Caco-2 (cell line): ENCODE measurements at regions of chr15 and their contacts with region 1.

Region 1: DNA sequence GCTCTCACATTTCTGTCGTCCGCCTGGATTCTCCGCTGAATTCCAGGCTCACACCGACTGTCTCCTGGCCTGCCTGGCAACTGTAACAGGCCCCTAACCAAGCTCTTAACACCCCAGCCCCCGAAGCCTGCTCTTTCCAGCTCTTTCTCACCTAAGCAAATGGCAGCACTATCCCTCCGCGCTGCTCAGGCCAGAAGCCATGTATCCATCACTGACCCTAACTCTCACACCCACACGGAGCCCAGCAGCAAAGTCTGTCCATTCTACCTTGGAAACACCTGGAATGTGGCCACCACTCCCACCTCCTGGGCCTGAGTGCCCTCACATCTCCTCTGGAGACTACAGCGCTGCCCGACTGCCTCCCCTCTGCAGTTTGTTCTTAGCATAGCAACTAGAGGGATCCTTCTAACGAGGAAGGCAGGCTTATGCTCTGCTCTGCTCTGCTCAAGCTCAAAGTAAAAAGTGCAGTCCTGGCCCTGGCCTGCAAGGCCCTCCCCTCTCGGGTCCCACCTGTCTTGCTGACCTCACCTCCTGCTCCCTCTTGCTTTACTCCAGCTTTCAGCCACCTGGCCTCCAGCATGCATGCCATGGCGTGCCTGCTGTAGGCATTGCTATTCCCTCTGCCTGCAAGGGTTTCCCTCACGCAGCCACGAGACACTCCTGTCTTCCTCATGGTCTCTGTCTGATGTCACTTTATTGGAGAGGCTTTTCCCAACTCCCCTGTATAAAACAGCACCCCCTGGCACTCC is 27.2 kb downstream of the FEM1B start:
- DNase-seq: peak in 1 of 2 experiments; percentile 33
- H3K4me3 ChIP-seq: no peak overlapping the region
- H3K4me3 Mint-ChIP-seq: no peak overlapping the region
- H3K27ac Mint-ChIP-seq: peak overlapping the region; percentile 19
- H3K4me1 ChIP-seq: peaks cover 23% of the 10 kb centered on the region
- H3K4me1 Mint-ChIP-seq: peaks cover 30% of the 10 kb centered on the region
- H3K27me3 ChIP-seq: no peaks in the 10 kb centered on the region
- H3K27me3 Mint-ChIP-seq: no peaks in the 10 kb centered on the region
- CTCF ChIP-seq: peak in 1 of 2 experiments; percentile 25

Region 2: GRCh38 chr15:67746022-67746421 is 558.7 kb before region 1 on chr15:
- CTCF ChIA-PET with region 1: no interaction called
- POLR2A ChIA-PET with region 1: no interaction called
- intact Hi-C with region 1: no loop called
- DNase-seq: no peak
- H3K4me3 ChIP-seq: no peak overlapping the region
- H3K4me3 Mint-ChIP-seq: no peak overlapping the region
- H3K27ac Mint-ChIP-seq: no peak overlapping the region
- H3K4me1 ChIP-seq: peaks cover 5% of the 10 kb centered on the region; the same call in 1 of the 2 replicates
- H3K4me1 Mint-ChIP-seq: peaks cover 7% of the 10 kb centered on the region
- H3K27me3 ChIP-seq: no peaks in the 10 kb centered on the region
- H3K27me3 Mint-ChIP-seq: no peaks in the 10 kb centered on the region
- CTCF ChIP-seq: no peak

Region 3: GRCh38 chr15:68241088-68241935 is 63.5 kb before region 1 on chr15:
- CTCF ChIA-PET with region 1: no interaction called
- POLR2A ChIA-PET with region 1: no interaction called
- intact Hi-C with region 1: no loop called
- DNase-seq: no peak
- H3K4me3 ChIP-seq: no peak overlapping the region
- H3K4me3 Mint-ChIP-seq: no peak overlapping the region
- H3K27ac Mint-ChIP-seq: no peak overlapping the region
- H3K4me1 ChIP-seq: no peaks in the 10 kb centered on the region
- H3K4me1 Mint-ChIP-seq: no peaks in the 10 kb centered on the region
- H3K27me3 ChIP-seq: no peaks in the 10 kb centered on the region
- H3K27me3 Mint-ChIP-seq: no peaks in the 10 kb centered on the region
- CTCF ChIP-seq: no peak

Region 4: GRCh38 chr15:68252925-68253534 is 51.7 kb before region 1 on chr15:
- CTCF ChIA-PET with region 1: interaction called, 75 read pairs
- POLR2A ChIA-PET with region 1: no interaction called
- intact Hi-C with region 1: loop called (anchors 1 kb)
- DNase-seq: peak in 1 of 2 experiments; percentile 63
- H3K4me3 ChIP-seq: no peak overlapping the region
- H3K4me3 Mint-ChIP-seq: no peak overlapping the region
- H3K27ac Mint-ChIP-seq: no peak overlapping the region
- H3K4me1 ChIP-seq: no peaks in the 10 kb centered on the region
- H3K4me1 Mint-ChIP-seq: no peaks in the 10 kb centered on the region
- H3K27me3 ChIP-seq: no peaks in the 10 kb centered on the region
- H3K27me3 Mint-ChIP-seq: peaks cover 3% of the 10 kb centered on the region
- CTCF ChIP-seq: peak; percentile 60 to 82

Region 5: DNA sequence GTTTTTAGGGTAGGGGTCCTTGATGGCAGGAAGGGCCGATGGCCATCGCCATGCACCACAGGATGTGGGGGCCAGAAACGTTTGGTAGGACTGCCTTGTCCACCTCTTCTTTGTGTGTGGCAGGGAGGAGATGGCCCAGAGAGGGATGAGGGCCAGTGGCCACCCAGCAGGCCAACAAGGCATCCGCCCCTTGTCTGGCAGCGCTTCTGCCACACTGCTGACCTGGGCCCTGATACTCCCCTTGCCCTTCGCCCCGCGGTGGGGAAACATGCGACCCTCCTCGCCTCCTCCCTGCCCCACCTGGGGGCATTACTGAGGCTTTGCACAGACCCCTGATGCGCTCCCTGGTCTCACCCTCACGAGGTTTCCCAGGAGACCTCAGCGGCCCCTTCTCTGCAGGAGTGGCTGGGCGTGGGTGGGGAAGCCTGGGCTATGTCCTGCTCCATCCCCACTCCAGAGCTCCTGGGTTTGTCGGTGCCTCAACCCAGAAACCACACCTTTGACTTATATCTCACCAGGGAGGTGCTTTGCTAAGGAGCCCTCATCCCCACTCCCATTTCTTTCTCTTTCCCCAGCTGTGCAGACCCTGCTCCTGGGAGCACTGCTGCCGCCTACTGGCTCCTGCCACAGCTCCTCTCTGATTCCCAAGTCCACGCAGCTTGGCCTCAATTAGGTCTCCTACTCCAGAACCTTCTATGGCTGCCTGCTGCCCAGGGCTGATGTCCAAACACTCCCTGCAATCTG is 11.5 kb after region 1 on chr15:
- CTCF ChIA-PET with region 1: interaction called, 13 read pairs
- POLR2A ChIA-PET with region 1: no interaction called
- intact Hi-C with region 1: no loop called
- DNase-seq: peak; percentile 47 to 50
- H3K4me3 ChIP-seq: no peak overlapping the region
- H3K4me3 Mint-ChIP-seq: no peak overlapping the region
- H3K27ac Mint-ChIP-seq: no peak overlapping the region
- H3K4me1 ChIP-seq: no peaks in the 10 kb centered on the region
- H3K4me1 Mint-ChIP-seq: no peaks in the 10 kb centered on the region
- H3K27me3 ChIP-seq: no peaks in the 10 kb centered on the region
- H3K27me3 Mint-ChIP-seq: no peaks in the 10 kb centered on the region
- CTCF ChIP-seq: peak; percentile 39 to 49

Region 6: DNA sequence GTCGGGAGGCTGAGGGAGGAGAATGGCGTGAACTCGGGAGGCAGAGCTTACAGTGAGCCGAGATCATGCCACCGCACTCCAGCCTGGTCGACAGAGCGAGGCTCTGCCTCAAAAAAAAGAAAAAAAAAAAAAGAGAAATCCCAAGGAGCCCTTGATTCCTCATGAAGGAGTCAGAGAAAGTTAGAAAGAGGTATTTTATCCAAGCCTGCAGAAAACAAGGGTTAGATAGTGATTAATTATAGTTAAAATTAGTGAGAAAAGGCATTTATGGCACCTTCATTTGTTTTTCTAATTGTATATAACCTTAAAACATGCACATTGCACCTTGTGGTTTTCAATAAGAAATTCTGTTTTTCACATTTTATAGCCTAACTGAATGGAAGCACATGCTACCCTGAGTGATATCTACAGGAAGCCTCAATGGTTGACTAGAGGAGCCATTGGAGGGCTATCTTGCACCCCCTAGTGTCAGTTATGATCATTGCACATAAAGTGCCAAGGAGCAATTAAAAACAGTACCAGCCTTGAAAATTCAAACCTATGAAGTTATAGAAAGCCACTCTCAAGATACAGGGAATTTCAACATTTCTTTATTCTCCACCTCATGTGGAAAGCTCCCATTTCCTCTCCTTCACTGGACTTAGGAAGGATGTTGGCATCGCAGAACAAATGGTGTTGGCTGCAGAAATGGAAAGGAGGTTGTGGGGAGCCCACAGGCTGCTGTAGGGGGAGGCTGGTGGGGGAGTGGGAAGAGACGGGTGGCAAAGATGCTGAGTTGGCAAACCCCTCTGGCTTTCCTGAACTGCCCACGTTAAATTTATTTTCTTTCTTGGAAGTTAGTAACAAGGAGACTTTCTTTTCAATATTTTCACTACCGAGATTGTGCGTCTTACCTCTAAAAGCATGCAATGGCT is 78.7 kb after region 1 on chr15:
- CTCF ChIA-PET with region 1: interaction called, 3 read pairs
- POLR2A ChIA-PET with region 1: no interaction called
- intact Hi-C with region 1: loop called (anchors 1 kb)
- DNase-seq: peak in 1 of 2 experiments; percentile 57
- H3K4me3 ChIP-seq: no peak overlapping the region
- H3K4me3 Mint-ChIP-seq: no peak overlapping the region
- H3K27ac Mint-ChIP-seq: no peak overlapping the region
- H3K4me1 ChIP-seq: no peaks in the 10 kb centered on the region
- H3K4me1 Mint-ChIP-seq: peaks cover 6% of the 10 kb centered on the region
- H3K27me3 ChIP-seq: no peaks in the 10 kb centered on the region
- H3K27me3 Mint-ChIP-seq: peaks cover 2% of the 10 kb centered on the region
- CTCF ChIP-seq: peak; percentile 40 to 56

Region 7: DNA sequence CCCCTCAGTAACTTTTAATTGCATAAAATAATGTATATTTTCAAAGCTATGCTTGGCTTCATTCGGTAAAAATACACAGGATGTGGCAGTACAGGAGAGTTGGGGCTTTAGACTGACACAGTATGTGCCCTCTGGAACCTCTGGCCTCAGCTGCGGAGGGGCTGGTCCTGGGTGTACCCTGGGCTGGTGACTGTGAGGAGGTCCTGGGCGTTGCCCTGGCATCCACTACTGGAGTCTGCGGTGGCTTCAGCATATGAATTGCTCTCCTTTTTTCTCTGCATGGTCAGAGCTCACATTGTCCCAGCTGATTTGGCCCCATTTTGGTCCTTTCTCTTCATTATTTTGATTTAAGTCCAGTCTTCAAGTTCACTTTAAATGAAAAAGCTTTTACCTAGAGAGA is 233.5 kb after region 1 on chr15:
- CTCF ChIA-PET with region 1: interaction called, 23 read pairs
- POLR2A ChIA-PET with region 1: no interaction called
- intact Hi-C with region 1: loop called (anchors 1 kb)
- DNase-seq: no peak
- H3K4me3 ChIP-seq: no peak overlapping the region
- H3K4me3 Mint-ChIP-seq: no peak overlapping the region
- H3K27ac Mint-ChIP-seq: no peak overlapping the region
- H3K4me1 ChIP-seq: no peaks in the 10 kb centered on the region
- H3K4me1 Mint-ChIP-seq: peaks cover 1% of the 10 kb centered on the region
- H3K27me3 ChIP-seq: no peaks in the 10 kb centered on the region
- H3K27me3 Mint-ChIP-seq: peaks cover 3% of the 10 kb centered on the region
- CTCF ChIP-seq: no peak

Region 8: DNA sequence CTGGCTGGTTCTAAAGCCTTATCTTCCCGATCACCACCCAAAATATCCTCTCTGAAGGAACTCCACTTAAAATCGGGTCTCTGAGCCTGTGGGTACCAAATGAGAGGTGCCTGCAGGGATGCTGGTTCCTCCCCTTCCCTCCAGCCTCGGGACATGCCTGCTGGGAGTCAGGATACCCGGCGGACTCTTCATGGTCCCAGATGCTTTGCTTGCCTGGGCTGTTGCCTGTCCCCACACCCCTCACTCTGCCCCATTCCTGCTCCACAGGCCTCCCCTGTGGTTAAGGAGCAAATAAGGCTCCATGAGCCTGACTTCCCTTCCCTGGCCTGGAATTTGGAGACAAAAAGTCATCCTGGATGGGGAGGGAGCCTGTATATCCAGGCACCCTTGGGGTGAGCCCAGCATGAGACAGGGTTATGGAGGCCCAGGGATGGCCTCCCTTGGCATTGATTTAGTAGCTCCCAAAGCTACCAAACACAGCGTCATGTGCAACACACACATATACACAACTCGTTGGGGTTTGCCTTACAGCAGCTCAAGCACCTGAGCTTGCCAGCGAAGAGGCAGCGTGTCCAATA is 261.7 kb after region 1 on chr15:
- CTCF ChIA-PET with region 1: no interaction called
- POLR2A ChIA-PET with region 1: no interaction called
- intact Hi-C with region 1: no loop called
- DNase-seq: peak in 1 of 2 experiments; percentile 18
- H3K4me3 ChIP-seq: no peak overlapping the region
- H3K4me3 Mint-ChIP-seq: no peak overlapping the region
- H3K27ac Mint-ChIP-seq: no peak overlapping the region
- H3K4me1 ChIP-seq: no peaks in the 10 kb centered on the region
- H3K4me1 Mint-ChIP-seq: peaks cover 7% of the 10 kb centered on the region
- H3K27me3 ChIP-seq: no peaks in the 10 kb centered on the region
- H3K27me3 Mint-ChIP-seq: peaks cover 16% of the 10 kb centered on the region
- CTCF ChIP-seq: no peak

Region 9: GRCh38 chr15:68672781-68673205 is 368.0 kb after region 1 on chr15:
- CTCF ChIA-PET with region 1: interaction called, 8 read pairs
- POLR2A ChIA-PET with region 1: no interaction called
- intact Hi-C with region 1: loop called (anchors 5 kb)
- DNase-seq: peak in 1 of 2 experiments; percentile 16
- H3K4me3 ChIP-seq: no peak overlapping the region
- H3K4me3 Mint-ChIP-seq: no peak overlapping the region
- H3K27ac Mint-ChIP-seq: no peak overlapping the region
- H3K4me1 ChIP-seq: no peaks in the 10 kb centered on the region
- H3K4me1 Mint-ChIP-seq: no peaks in the 10 kb centered on the region
- H3K27me3 ChIP-seq: no peaks in the 10 kb centered on the region; the same call in 1 of the 2 replicates
- H3K27me3 Mint-ChIP-seq: peaks cover 3% of the 10 kb centered on the region
- CTCF ChIP-seq: peak in 1 of 2 experiments; percentile 43